CD14-positive monocyte (primary cell): ENCODE measurements at regions of chr9 and their contacts with region 1.

Region 1: DNA sequence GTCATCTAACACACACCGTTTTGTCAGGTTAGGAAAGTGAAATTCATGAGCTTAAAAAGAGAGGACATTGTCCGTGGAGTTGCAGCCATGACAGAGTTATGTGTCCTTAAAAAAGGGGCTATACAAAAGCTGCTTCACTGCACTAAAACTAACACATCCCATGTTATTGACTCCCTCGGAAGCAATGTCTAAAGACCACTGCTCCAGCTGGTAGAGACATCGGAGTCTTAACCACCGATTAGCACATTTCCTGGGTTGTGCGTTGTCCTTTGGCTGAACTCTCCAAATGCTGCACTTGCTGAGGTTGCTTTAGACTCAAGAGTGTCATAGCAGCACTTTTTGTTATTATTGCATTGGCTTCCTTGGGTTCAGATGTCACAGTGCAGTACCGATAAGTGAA is 128.3 kb upstream of the C9orf72 start:
- DNase-seq: peak; percentile 62 to 79 (median 78)
- H3K4me3 ChIP-seq: peak overlapping the region; percentile 10 to 65 (median 49)
- H3K4me3 Mint-ChIP-seq: peak overlapping the region; percentile 61 to 67
- H3K27ac ChIP-seq: peak overlapping the region in 1 of 2 donors; percentile 86
- H3K27ac Mint-ChIP-seq: peak overlapping the region; percentile 90 to 99 (median 95)
- H3K4me1 ChIP-seq: peaks cover 30 to 41% of the 10 kb centered on the region in 2 donors
- H3K4me1 Mint-ChIP-seq: peaks cover 40% of the 10 kb centered on the region
- H3K27me3 ChIP-seq: no peaks in the 10 kb centered on the region
- H3K27me3 Mint-ChIP-seq: peaks cover 0 to 4% (median 0%) of the 10 kb centered on the region in 3 donors
- CTCF ChIP-seq: no peak

Region 2: GRCh38 chr9:27634879-27635278 is 66.7 kb before region 1 on chr9:
- intact Hi-C with region 1: loop called in 1 of 2 experiments (anchors 10 kb)
- DNase-seq: peak; percentile 64 to 82 (median 82)
- H3K4me3 ChIP-seq: peak overlapping the region in 1 of 3 experiments; percentile 22
- H3K4me3 Mint-ChIP-seq: peak overlapping the region in 1 of 2 donors; percentile 10
- H3K27ac ChIP-seq: peak overlapping the region in 1 of 2 donors; percentile 65
- H3K27ac Mint-ChIP-seq: peak overlapping the region; percentile 46 to 80 (median 68)
- H3K4me1 ChIP-seq: peaks cover 25 to 28% of the 10 kb centered on the region in 2 donors
- H3K4me1 Mint-ChIP-seq: peaks cover 24% of the 10 kb centered on the region
- H3K27me3 ChIP-seq: no peaks in the 10 kb centered on the region
- H3K27me3 Mint-ChIP-seq: peaks cover 0 to 2% (median 0%) of the 10 kb centered on the region in 3 donors
- CTCF ChIP-seq: no peak